Activated CD8-positive, alpha-beta T cell treated with anti-CD3 and anti-CD28 coated beads, Interleukin-2, amount 10 ng/mL, durations not matched to agents 7 days and 5 days (primary cell): ENCODE measurements at regions of chr2 and their contacts with region 1.

Region 1: GRCh38 chr2:157420771-157421323 is 23.0 kb downstream of the CYTIP start:
- DNase-seq: no peak
- ATAC-seq: peak; percentile 10
- H3K4me3 Mint-ChIP-seq: peak overlapping the region; percentile 45
- H3K27ac Mint-ChIP-seq: peak overlapping the region; percentile 81
- H3K4me1 Mint-ChIP-seq: peaks cover 75% of the 10 kb centered on the region
- H3K27me3 Mint-ChIP-seq: no peaks in the 10 kb centered on the region

Region 2: GRCh38 chr2:157404363-157404762 is 16.5 kb before region 1 on chr2:
- CTCF ChIA-PET with region 1: interaction called, 3 read pairs
- POLR2A ChIA-PET with region 1: interaction called, 16 read pairs
- DNase-seq: peak; percentile 78
- ATAC-seq: peak; percentile 97
- H3K4me3 Mint-ChIP-seq: peak overlapping the region; percentile 15
- H3K27ac Mint-ChIP-seq: peak overlapping the region; percentile 84
- H3K4me1 Mint-ChIP-seq: peaks cover 70% of the 10 kb centered on the region
- H3K27me3 Mint-ChIP-seq: no peaks in the 10 kb centered on the region

Region 3: GRCh38 chr2:157433394-157433793 is 12.5 kb after region 1 on chr2:
- CTCF ChIA-PET with region 1: interaction called, 42 read pairs
- POLR2A ChIA-PET with region 1: interaction called, 144 read pairs
- DNase-seq: no peak
- ATAC-seq: peak; percentile 15
- H3K4me3 Mint-ChIP-seq: peak overlapping the region; percentile 94
- H3K27ac Mint-ChIP-seq: peak overlapping the region; percentile 86
- H3K4me1 Mint-ChIP-seq: peaks cover 77% of the 10 kb centered on the region
- H3K27me3 Mint-ChIP-seq: no peaks in the 10 kb centered on the region